Caco-2 (cell line): ENCODE measurements at regions of chr1 and their contacts with region 1.

Region 1: DNA sequence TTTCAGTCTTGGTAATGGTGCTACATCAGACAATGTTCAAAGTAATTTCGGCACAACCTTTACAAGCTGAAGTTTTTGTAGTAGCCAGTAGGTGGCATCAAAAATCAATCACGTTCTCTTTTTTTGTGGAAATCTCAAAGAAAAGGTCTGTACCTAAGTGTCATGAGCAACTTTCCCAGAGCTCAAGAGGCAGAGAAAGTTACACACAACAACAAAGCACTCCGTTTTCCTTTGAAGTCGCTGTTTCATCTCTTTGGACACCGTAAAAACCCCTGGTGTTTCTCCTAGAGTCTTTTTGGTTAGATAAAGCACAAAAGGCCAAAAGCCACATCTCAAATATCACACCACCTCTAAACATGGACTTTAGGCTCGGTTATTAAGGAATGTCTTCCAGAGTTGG is 131.6 kb downstream of the LHX8 start:
- DNase-seq: peak; percentile 60 to 67
- H3K4me3 ChIP-seq: no peak overlapping the region
- H3K4me3 Mint-ChIP-seq: peak overlapping the region; percentile 35
- H3K27ac Mint-ChIP-seq: peak overlapping the region; percentile 83
- H3K4me1 ChIP-seq: peaks cover 23% of the 10 kb centered on the region
- H3K4me1 Mint-ChIP-seq: peaks cover 29% of the 10 kb centered on the region
- H3K27me3 ChIP-seq: no peaks in the 10 kb centered on the region
- H3K27me3 Mint-ChIP-seq: no peaks in the 10 kb centered on the region
- CTCF ChIP-seq: peak; percentile 46 to 50

Region 2: DNA sequence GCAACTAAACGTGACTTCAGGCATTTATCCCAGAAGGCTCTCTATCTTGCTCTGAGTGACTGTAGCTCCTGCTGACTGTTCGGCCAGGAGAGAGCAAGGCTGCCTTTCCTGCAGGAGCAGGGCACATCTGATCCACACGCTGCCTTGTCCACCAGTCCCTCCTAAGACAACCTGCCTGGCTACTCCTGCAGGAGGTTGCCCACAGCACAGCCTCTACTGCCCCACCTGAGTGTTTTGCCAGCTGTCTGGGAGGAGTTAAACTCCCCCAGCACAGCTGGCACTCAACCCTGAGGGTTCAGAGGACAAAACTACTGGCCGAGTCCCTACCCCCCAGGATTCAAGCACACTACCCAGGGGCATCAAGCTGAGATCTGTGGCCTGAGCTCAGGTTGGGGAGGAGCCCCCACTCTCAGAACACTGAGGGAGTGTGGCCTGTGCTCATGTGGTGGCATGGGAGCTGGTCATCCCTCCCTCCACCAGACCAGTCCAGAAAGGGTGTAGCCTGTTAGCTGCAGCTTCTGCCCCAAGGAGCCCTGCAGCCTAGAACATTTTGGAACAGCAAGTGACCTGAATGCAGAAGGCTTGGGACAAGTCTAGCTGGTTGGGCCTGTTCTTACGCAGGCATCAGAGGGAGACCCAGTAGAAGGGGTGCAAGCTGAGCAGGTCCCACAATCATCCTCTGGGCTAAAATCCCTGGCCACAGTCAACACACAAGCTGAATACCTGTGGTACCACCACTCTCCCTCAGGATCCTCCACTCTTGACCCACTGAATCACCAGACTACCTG is 107.9 kb after region 1 on chr1:
- CTCF ChIA-PET with region 1: no interaction called
- POLR2A ChIA-PET with region 1: no interaction called
- intact Hi-C with region 1: loop called (anchors 1 kb)
- DNase-seq: peak; percentile 9 to 33
- H3K4me3 ChIP-seq: peak overlapping the region; percentile 46; the same call in 1 of the 2 replicates
- H3K4me3 Mint-ChIP-seq: peak overlapping the region; percentile 96
- H3K27ac Mint-ChIP-seq: peak overlapping the region; percentile 97
- H3K4me1 ChIP-seq: no peaks in the 10 kb centered on the region
- H3K4me1 Mint-ChIP-seq: no peaks in the 10 kb centered on the region
- H3K27me3 ChIP-seq: no peaks in the 10 kb centered on the region
- H3K27me3 Mint-ChIP-seq: no peaks in the 10 kb centered on the region
- CTCF ChIP-seq: no peak

Region 3: GRCh38 chr1:75501577-75502295 is 235.9 kb after region 1 on chr1:
- CTCF ChIA-PET with region 1: no interaction called
- POLR2A ChIA-PET with region 1: no interaction called
- intact Hi-C with region 1: loop called (anchors 1 kb)
- DNase-seq: peak in 1 of 2 experiments; percentile 3
- H3K4me3 ChIP-seq: no peak overlapping the region
- H3K4me3 Mint-ChIP-seq: no peak overlapping the region
- H3K27ac Mint-ChIP-seq: no peak overlapping the region
- H3K4me1 ChIP-seq: peaks cover 7% of the 10 kb centered on the region; the same call in 1 of the 2 replicates
- H3K4me1 Mint-ChIP-seq: no peaks in the 10 kb centered on the region
- H3K27me3 ChIP-seq: no peaks in the 10 kb centered on the region
- H3K27me3 Mint-ChIP-seq: no peaks in the 10 kb centered on the region
- CTCF ChIP-seq: no peak

Region 4: GRCh38 chr1:75632350-75632949 is 366.7 kb after region 1 on chr1:
- CTCF ChIA-PET with region 1: interaction called, 5 read pairs
- POLR2A ChIA-PET with region 1: no interaction called
- intact Hi-C with region 1: loop called (anchors 1 kb)
- DNase-seq: peak in 1 of 2 experiments; percentile 43
- H3K4me3 ChIP-seq: no peak overlapping the region
- H3K4me3 Mint-ChIP-seq: no peak overlapping the region
- H3K27ac Mint-ChIP-seq: no peak overlapping the region
- H3K4me1 ChIP-seq: no peaks in the 10 kb centered on the region
- H3K4me1 Mint-ChIP-seq: peaks cover 7% of the 10 kb centered on the region
- H3K27me3 ChIP-seq: no peaks in the 10 kb centered on the region
- H3K27me3 Mint-ChIP-seq: no peaks in the 10 kb centered on the region
- CTCF ChIP-seq: peak; percentile 50 to 62

Region 5: DNA sequence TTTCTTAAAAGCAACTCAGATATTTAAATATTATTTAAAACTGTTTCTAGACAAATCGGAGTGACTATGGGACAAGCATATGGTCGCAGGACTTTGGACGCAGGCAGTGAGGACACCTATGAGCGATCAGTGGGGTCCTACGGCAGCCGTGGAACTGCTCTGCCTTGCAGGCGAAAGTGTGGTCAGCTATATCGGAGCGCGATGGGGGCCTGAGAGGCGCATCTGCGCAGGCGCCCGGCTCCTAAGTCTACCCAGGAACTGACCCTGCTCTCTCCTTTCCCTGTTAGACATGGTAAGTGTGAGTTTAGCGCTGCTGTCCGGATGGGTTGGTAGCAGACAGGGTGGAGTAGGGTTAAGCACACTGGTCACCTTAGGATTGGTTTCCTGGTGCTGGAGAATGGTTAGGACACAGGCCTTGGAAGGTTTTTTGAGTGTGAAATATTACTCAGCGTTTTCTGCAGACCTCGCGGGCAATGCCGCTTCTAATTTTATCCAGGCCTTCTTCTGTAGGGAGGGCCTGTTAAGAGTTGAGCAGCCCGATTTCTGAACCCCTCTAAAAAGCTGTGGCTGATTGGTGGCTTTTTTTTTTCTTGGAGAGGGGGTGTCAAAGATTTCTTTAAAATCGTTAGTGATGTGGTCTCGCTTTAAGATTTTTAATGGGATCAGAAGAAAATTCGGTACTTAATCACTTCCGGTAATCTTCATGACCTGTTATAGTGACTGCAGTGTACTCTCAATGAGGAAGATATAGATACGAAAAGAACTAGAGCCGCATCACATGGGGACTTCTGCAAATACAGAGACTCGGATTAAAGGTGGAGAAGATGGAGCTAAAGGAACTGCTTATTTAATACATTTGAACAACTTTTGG is 520.4 kb after region 1 on chr1 and contains the start of gene RABGGTB:
- CTCF ChIA-PET with region 1: no interaction called
- POLR2A ChIA-PET with region 1: no interaction called
- intact Hi-C with region 1: loop called (anchors 10 kb)
- DNase-seq: peak; percentile 93 to 94
- H3K4me3 ChIP-seq: peak within 1 kb of the TSS; percentile 60
- H3K4me3 Mint-ChIP-seq: peak within 1 kb of the TSS; percentile 98
- H3K27ac Mint-ChIP-seq: peak within 1 kb of the TSS; percentile 97
- H3K4me1 ChIP-seq: peaks cover 24% of the 10 kb centered on the region
- H3K4me1 Mint-ChIP-seq: peaks cover 6% of the 10 kb centered on the region
- H3K27me3 ChIP-seq: no peaks in the 10 kb centered on the region
- H3K27me3 Mint-ChIP-seq: no peaks in the 10 kb centered on the region
- CTCF ChIP-seq: no peak
- total RNA-seq, gene RABGGTB: 88.6 and 96.0 TPM in 2 replicates